Heart right ventricle (tissue), 16 donors: ENCODE measurements at regions of chr1 and their contacts with region 1.

Region 1: GRCh38 chr1:16078925-16079656 is 5.6 kb upstream of the FAM131C start:
- DNase-seq: peak; percentile 76 to 79
- ATAC-seq: peak; percentile 40 to 82 (median 66)
- H3K4me3 ChIP-seq: peak overlapping the region in 2 of 10 donors; percentile 15 to 29
- H3K27ac ChIP-seq: peak overlapping the region in 4 of 10 donors; percentile 4 to 32 (median 10)
- H3K4me1 ChIP-seq: peaks cover 2 to 68% (median 31%) of the 10 kb centered on the region in 9 donors
- H3K27me3 ChIP-seq: peaks cover 0 to 10% (median 0%) of the 10 kb centered on the region in 7 donors
- CTCF ChIP-seq: peak; percentile 83 to 93 (median 89)

Region 2: DNA sequence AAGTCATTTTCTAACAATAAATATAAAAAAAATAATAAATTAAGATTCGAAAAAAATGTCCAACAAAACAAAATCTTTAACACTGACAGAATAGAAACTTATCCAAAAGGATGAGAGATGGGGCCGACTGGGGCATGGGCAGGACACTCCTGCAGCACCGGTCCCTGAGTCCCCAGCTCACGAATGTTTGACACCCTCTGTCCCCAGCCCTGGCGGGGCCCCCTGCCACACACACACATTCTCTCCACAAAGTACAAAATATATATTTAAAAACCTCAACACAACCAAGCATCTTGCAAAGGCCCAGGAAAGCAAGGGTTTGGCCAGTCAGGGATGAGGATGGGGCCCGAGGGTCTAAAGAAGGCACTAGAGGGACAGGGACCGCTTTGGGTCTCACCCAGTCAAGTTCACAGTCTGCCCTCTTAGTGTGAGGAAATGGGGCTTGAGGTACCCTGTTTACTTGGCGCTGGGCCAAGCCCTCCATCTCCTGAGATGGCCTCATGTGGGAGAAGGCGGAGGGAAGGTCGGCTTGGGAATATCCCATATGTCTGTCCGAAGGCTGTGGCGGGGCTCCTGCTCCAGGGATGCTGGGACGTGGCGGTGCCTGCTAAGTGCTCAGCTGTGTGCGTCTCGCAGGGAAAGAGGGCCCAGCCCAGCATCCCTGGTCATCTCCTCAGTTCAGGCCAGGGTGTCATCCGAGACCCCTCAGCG is 45.4 kb after region 1 on chr1:
- intact Hi-C with region 1: loop called in 1 of 10 experiments (anchors 5 kb)
- DNase-seq: peak in 1 of 2 donors; percentile 18
- ATAC-seq: no peak
- H3K4me3 ChIP-seq: no peak overlapping the region
- H3K27ac ChIP-seq: peak overlapping the region in 1 of 10 donors; percentile 6
- H3K4me1 ChIP-seq: peaks cover 0 to 46% (median 28%) of the 10 kb centered on the region in 9 donors
- H3K27me3 ChIP-seq: no peaks in the 10 kb centered on the region
- CTCF ChIP-seq: no peak

Region 3: GRCh38 chr1:16146279-16147155 is 67.4 kb after region 1 on chr1:
- intact Hi-C with region 1: loop called in 1 of 10 experiments (anchors 5 kb)
- DNase-seq: peak; percentile 78 to 90
- ATAC-seq: peak; percentile 48 to 78 (median 70)
- H3K4me3 ChIP-seq: peak overlapping the region in 8 of 10 donors; percentile 18 to 49 (median 38)
- H3K27ac ChIP-seq: peak overlapping the region; percentile 72 to 99 (median 96)
- H3K4me1 ChIP-seq: peaks cover 56 to 90% (median 81%) of the 10 kb centered on the region in 9 donors
- H3K27me3 ChIP-seq: no peaks in the 10 kb centered on the region
- CTCF ChIP-seq: peak in 1 of 9 donors; percentile 16

Region 4: GRCh38 chr1:16187748-16188401 is 108.8 kb after region 1 on chr1:
- intact Hi-C with region 1: loop called (anchors 1 to 5 kb)
- DNase-seq: peak; percentile 69 to 83
- ATAC-seq: peak; percentile 72 to 84 (median 80)
- H3K4me3 ChIP-seq: no peak overlapping the region
- H3K27ac ChIP-seq: no peak overlapping the region
- H3K4me1 ChIP-seq: peaks cover 0 to 38% (median 10%) of the 10 kb centered on the region in 9 donors
- H3K27me3 ChIP-seq: no peaks in the 10 kb centered on the region
- CTCF ChIP-seq: peak; percentile 94 to 99 (median 97)

Region 5: DNA sequence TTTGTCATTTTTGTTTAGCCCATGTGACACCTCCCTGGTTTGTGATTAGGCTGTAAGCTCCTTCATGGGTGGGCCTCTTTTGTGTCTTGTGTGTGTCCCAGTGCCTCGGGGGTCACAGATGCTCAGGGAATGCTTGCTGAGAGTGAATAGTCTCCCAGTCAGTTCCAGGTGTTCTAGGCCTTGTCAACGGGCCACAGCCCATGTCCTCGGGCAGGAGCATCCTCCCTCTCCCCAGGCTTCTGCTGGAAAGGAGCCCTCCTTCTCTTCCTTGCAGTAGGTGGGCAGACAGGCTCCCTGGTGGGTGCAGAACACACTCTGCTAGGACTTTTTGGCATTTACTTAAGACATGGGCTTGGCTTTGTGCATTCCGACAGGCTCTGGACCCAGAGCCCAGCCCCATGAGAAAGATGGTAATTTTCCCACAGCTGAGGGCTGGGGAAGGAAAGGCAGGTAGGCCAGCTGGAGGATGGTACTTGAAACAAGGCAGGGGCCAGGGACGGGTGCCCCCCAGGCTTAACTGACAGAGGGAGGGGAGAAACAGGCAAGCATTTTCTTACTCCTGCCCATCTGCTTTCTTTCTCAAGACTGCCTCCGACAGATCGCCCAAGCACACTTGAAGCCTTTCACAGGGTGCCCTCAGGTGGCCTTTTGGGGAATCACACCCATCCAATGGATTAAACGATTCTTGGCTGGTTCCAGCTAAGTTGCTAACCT is 165.0 kb after region 1 on chr1:
- intact Hi-C with region 1: loop called in 9 of 10 experiments (anchors 1 to 5 kb)
- DNase-seq: peak; percentile 65 to 76
- ATAC-seq: peak; percentile 7 to 57 (median 38)
- H3K4me3 ChIP-seq: no peak overlapping the region
- H3K27ac ChIP-seq: peak overlapping the region in 3 of 10 donors; percentile 10 to 46 (median 36)
- H3K4me1 ChIP-seq: peaks cover 13 to 48% (median 34%) of the 10 kb centered on the region in 9 donors
- H3K27me3 ChIP-seq: no peaks in the 10 kb centered on the region
- CTCF ChIP-seq: peak; percentile 76 to 87 (median 83)